Activated T-helper 1 cell treated with anti-CD3 and anti-CD28 coated beads, Interleukin-12 subunit alpha, Interleukin-12 subunit beta, Interleukin-2, Interleukin-4 antibody, amounts not matched to agents 30 ng/mL and 10 ng/mL and 1 ng/mL, durations not matched to agents 14 hours and 24 hours and 36 hours (primary cell): ENCODE measurements at regions of chr10 and their contacts with region 1.

Region 1: DNA sequence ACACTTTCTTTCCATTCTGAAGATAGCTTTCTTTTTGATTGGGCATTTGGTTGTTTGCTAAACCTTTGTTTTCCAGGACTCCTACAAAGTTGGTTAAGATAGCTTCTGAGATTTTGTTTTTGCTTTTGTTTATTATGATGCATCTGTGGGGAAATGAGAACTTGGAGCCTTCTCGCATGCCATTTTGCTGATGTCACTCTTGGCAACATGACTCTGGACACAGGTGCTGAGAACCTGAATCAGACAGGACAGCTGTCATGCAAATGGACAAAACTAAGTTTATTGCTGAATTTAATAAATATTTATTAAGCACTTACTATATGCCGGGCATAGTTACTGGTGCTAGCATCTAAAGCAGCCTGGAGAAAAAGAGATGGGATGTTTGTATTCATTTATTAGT is 274.1 kb downstream of the ZEB1 start:
- DNase-seq: no peak
- H3K4me3 Mint-ChIP-seq: no peak overlapping the region
- H3K27ac Mint-ChIP-seq: no peak overlapping the region
- H3K4me1 Mint-ChIP-seq: peaks cover 5% of the 10 kb centered on the region
- H3K27me3 Mint-ChIP-seq: peaks cover 7% of the 10 kb centered on the region

Region 2: DNA sequence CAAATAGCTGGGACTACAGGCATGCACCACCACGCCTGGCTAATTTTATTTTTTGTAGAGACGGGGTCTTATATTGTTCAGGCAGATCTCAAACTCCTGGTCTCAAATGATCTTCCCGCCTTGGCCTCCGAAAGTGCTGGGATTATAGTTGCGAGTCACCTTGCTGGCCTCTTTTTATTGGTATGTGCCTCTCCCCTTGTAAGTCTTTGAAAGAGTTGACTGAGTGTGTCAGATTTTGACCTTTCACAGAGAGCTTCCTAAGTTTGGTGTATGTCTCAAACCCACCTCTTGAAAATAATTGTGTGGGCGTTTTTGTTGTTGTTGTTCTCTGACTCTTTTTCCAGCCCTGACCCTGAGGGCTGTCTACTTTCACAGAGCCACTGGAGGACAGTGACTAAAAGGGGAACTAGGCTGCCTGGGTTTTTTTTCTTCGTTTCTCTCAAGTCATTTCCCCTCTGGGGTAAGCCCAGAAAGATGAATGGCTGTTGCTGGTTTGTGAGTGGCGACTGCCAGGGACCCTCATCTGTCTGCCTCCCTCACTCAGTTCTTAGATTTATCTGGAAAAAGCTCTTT is 11.3 kb before region 1 on chr10:
- intact Hi-C with region 1: loop called (anchors 1 kb)
- DNase-seq: no peak
- H3K4me3 Mint-ChIP-seq: peak overlapping the region; percentile 5
- H3K27ac Mint-ChIP-seq: peak overlapping the region; percentile 21
- H3K4me1 Mint-ChIP-seq: peaks cover 23% of the 10 kb centered on the region
- H3K27me3 Mint-ChIP-seq: no peaks in the 10 kb centered on the region